Aorta (tissue), 5 donors: ENCODE measurements at regions of chr20 and their contacts with region 1.

Region 1: DNA sequence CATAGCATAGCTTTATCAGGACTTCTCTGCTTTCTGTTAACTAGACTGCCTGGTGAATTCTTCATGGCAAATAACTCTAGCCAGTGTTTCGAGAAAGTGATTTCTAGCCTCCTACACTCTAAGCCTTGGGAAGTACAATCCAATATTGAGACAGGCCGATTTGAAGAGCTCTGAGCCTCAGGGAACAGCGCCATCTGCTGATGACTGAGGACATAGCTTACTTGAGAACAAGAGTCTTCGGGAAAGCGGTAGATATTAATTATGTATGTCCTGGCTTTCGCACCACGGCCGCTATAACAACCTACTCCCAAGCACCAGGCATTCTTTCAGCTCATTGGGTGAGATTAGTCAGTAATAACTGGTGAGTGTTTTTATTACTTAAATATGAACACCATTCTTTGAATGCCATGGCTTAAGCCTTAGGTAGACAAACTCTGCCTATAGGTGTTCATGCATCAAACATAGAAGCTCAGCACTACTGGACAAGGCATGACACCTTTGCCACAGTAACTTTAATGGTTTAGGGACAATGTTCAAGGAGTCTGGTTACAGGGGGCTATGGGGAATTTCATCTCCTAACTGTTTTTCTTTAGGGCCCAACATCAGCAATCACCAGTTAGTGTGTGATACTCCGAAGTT is 518.6 kb downstream of the BMP2 start:
- DNase-seq: peak; percentile 68 to 80
- ATAC-seq: peak; percentile 73
- H3K4me3 ChIP-seq: no peak overlapping the region
- H3K27ac ChIP-seq: no peak overlapping the region
- H3K4me1 ChIP-seq: no peaks in the 10 kb centered on the region
- H3K27me3 ChIP-seq: peaks cover 0 to 2% of the 10 kb centered on the region in 2 donors

Region 2: DNA sequence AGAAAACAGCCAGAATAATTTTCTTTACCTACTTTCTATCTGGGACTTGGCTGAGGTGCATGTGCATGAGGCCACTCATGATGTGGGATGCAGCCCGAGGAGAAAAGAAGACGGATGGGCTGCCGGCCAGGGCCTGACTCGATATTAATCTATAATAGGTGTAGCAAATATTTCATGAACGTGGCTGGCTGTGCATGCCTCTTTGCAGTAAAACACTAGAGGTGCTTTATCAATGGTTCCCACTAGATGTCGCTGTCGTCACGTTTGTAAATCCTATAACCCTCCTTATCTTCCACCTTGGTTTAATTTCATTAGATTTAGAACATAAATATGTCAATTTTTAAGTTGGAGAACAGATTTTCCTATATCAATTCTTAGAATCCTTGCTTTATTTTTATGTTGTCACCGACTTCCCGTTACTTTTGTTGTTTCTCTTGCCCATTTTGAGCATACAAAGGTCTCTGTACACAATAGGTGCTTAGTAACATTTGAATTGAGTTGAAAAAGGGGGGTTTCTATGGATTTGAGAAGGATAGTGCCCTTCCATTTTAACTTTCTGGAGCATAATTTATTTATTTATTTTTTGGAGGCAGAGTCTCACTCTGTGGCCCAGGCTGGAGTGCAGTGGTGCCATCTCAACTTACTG is 1143.6 kb before region 1 on chr20:
- intact Hi-C with region 1: loop called (anchors 10 kb)
- DNase-seq: no peak
- ATAC-seq: no peak
- H3K4me3 ChIP-seq: no peak overlapping the region
- H3K27ac ChIP-seq: no peak overlapping the region
- H3K4me1 ChIP-seq: no peaks in the 10 kb centered on the region
- H3K27me3 ChIP-seq: no peaks in the 10 kb centered on the region

Region 3: GRCh38 chr20:6178537-6178936 is 1107.5 kb before region 1 on chr20:
- intact Hi-C with region 1: loop called in 1 of 2 experiments (anchors 10 kb)
- DNase-seq: no peak
- ATAC-seq: no peak
- H3K4me3 ChIP-seq: no peak overlapping the region
- H3K27ac ChIP-seq: no peak overlapping the region
- H3K4me1 ChIP-seq: no peaks in the 10 kb centered on the region
- H3K27me3 ChIP-seq: no peaks in the 10 kb centered on the region

Region 4: DNA sequence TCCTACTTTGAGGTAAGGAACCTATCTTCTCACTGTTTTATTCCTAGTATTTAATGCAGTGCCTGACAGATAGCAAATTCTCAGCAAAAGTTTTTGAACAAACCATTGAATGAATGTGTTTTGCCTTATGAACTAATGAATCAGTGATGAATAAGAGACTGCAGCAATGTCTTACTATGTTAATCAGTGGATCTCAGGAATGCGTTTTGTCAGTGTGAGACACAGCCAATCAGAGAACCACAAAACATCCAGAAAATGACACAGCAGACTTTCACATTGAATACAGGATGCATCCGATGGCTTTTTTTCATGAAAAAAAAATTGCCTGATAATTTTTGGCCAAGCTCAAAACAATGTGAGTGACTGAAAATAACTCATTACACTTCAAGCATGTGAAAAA is 248.0 kb before region 1 on chr20:
- intact Hi-C with region 1: no loop called
- DNase-seq: no peak
- ATAC-seq: no peak
- H3K4me3 ChIP-seq: no peak overlapping the region
- H3K27ac ChIP-seq: no peak overlapping the region
- H3K4me1 ChIP-seq: no peaks in the 10 kb centered on the region
- H3K27me3 ChIP-seq: no peaks in the 10 kb centered on the region

Region 5: DNA sequence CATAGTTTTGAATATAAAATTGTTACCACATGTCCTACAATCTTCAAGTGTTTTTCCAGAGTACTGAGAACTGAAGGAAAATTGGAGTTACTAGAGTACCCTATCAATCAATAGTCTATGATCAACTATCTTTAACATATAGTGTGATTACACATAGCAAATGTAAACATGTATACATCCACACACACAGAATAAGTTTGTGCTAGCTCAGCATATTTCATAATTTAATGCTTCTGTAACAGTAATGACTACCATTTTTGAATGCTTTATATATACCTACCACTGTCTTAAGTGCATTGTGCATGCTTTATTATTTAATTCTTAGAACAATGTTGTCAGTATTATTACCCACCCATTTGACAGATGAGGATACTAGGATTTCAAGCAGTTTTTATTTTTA is 130.3 kb after region 1 on chr20:
- intact Hi-C with region 1: no loop called
- DNase-seq: no peak
- ATAC-seq: no peak
- H3K4me3 ChIP-seq: no peak overlapping the region
- H3K27ac ChIP-seq: no peak overlapping the region
- H3K4me1 ChIP-seq: no peaks in the 10 kb centered on the region
- H3K27me3 ChIP-seq: no peaks in the 10 kb centered on the region